Stomach (tissue), 19 donors: ENCODE measurements at regions of chr7 and their contacts with region 1.

Region 1: GRCh38 chr7:100478966-100479665 is at the start of gene TSC22D4:
- DNase-seq: peak; percentile 96 to 97
- H3K4me3 ChIP-seq: peak within 1 kb of the TSS; percentile 97 to 100 (median 98)
- H3K27ac ChIP-seq: peak within 1 kb of the TSS; percentile 91 to 98 (median 95)
- H3K4me1 ChIP-seq: peaks cover 43 to 64% (median 57%) of the 10 kb centered on the region in 4 donors
- H3K27me3 ChIP-seq: no peaks in the 10 kb centered on the region
- CTCF ChIP-seq: no peak
- EP300 ChIP-seq: no peak
- POLR2A ChIP-seq: peak in 1 of 4 donors; percentile 63
- total RNA-seq, gene TSC22D4: 9.4 to 120 (median 28.0) TPM

Region 2: DNA sequence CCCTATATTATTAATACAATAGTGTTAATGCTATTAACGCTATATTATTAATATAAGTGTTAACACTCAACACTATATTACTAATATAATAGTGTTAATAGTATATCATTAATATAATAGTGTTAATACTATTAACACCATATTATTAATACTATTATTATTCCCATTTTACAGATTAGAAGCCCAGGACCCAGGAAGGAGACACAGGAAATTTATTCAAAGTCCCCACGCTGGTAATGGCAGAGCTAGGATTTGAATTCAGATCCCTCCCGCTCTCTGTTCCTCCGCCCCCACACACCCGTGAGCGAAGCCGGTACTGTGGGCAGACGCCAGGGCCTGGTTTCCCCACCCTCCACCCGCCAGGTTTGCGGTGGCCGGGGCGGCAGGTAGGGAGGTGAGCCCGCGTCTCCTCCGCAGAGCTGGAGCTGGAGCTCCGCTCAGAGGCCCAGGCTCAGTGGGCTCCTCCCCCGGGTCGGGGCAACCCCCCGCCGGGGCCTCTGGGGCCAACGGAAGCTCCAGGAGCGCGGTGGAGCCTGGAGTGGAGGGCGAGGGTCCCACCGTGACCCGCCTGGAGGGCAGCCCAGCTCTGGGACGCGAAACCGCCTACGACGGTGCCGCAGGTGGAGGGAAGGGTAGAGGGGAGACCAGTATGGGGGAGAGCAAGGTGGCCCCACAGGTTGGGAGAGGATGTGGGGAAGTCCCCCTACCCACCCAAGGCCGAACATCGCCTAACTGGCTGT is 881.2 kb before region 1 on chr7 and contains the start of gene TMEM225B:
- intact Hi-C with region 1: no loop called
- DNase-seq: peak in 1 of 2 donors; percentile 40
- H3K4me3 ChIP-seq: no peak within 1 kb of the TSS
- H3K27ac ChIP-seq: no peak within 1 kb of the TSS
- H3K4me1 ChIP-seq: no peaks in the 10 kb centered on the region
- H3K27me3 ChIP-seq: peaks cover 0 to 7% (median 0%) of the 10 kb centered on the region in 3 donors
- CTCF ChIP-seq: no peak
- EP300 ChIP-seq: no peak
- POLR2A ChIP-seq: no peak
- total RNA-seq, gene TMEM225B: 0.73 to 4.3 TPM in 2 of 5 donors, not detected in the others

Region 3: GRCh38 chr7:100215895-100216294 is 263.2 kb before region 1 on chr7:
- intact Hi-C with region 1: no loop called
- DNase-seq: peak; percentile 44 to 84
- H3K4me3 ChIP-seq: no peak overlapping the region
- H3K27ac ChIP-seq: no peak overlapping the region
- H3K4me1 ChIP-seq: peaks cover 0 to 14% (median 4%) of the 10 kb centered on the region in 4 donors
- H3K27me3 ChIP-seq: no peaks in the 10 kb centered on the region
- CTCF ChIP-seq: no peak
- EP300 ChIP-seq: no peak
- POLR2A ChIP-seq: no peak

Region 4: DNA sequence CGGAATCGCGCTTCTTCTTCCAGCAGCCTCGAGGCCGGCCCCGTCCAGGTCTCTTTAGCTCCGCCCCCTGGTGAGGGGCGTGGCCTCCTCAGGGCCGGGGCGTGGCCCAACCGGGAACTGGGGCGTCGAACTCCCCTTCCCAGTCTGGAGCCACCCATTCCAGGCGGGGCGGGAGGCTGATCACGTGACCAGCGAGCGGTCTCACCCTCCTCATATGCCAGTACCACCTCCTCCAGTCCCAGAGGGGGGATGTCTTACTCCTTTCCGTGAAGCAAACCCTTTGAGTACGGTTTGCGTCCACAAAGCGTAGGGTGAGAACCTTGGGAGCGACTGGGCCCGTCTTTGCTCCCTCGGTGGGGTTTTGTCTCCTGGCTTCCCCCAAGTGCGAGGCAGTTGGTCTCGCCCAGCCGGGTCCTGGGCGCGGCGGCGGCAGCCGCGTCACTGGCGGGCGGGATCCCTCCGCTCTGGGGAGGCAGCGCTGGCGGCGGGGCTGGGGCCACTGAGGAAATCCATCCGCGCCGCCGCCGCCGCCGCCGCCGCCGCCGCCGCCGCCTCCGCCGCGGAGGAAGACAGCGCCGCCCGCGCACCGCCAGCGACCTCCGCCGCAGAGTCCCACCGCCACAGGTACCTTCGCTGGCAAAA is 194.3 kb after region 1 on chr7 and contains the start of gene GNB2:
- intact Hi-C with region 1: loop called (anchors 10 kb)
- DNase-seq: peak; percentile 99
- H3K4me3 ChIP-seq: peak within 1 kb of the TSS; percentile 97 to 99 (median 97)
- H3K27ac ChIP-seq: peak within 1 kb of the TSS; percentile 98 to 100 (median 99)
- H3K4me1 ChIP-seq: peaks cover 4 to 33% (median 24%) of the 10 kb centered on the region in 4 donors
- H3K27me3 ChIP-seq: no peaks in the 10 kb centered on the region
- CTCF ChIP-seq: no peak
- EP300 ChIP-seq: no peak
- POLR2A ChIP-seq: no peak
- total RNA-seq, gene GNB2: 52.9 to 290 (median 152) TPM

Region 5: GRCh38 chr7:100691676-100692577 is 212.8 kb after region 1 on chr7:
- intact Hi-C with region 1: no loop called
- DNase-seq: peak; percentile 81 to 92
- H3K4me3 ChIP-seq: peak overlapping the region; percentile 88 to 98 (median 95)
- H3K27ac ChIP-seq: peak overlapping the region in 3 of 5 donors; percentile 22 to 90 (median 87)
- H3K4me1 ChIP-seq: peaks cover 37 to 71% (median 61%) of the 10 kb centered on the region in 4 donors
- H3K27me3 ChIP-seq: no peaks in the 10 kb centered on the region
- CTCF ChIP-seq: peak in 5 of 7 experiments; percentile 77 to 95 (median 92)
- EP300 ChIP-seq: no peak
- POLR2A ChIP-seq: no peak